PC-3 (cell line): ENCODE measurements at regions of chr7 and their contacts with region 1.

Region 1: DNA sequence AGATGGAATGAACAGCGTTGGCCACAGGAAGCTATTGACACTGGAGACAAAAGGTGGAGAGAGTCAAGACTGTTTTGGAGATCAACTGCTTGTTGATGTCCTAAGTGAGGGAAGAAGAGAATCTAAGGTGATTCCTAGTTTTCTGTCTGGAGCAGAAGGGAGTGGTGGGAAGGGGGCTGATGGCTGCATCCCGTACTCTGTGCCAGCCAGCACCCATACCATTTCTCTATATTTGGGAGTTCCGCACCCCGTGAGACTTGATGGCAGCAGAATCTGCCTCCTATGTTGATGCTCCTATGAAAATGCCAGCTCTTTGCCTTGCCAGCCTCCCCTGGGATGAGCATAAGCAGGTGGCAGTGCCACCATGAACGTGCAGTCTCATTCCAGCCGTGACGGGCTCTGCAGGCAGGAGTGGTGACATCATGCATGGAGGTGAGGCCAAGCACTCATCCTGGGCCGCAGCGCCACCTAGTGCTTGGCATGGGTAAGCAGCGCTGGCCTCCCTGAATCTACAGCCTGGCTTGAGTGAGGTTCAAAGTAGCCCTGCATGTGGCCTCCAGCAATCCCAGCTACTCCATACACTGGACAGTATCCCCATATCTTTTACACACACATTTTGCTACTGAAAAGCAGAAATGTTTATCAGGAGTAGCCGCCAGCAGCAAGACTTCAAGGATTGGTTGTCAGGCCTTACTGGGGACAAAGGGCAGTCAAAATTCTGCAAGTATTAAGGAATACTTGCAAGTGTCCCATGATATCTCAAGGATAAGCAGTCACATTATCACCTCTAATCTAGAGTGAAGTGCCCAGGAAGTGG is 43.0 kb downstream of the PODXL start:
- DNase-seq: peak; percentile 83
- ATAC-seq: peak; percentile 95
- H3K4me3 ChIP-seq: no peak overlapping the region
- H3K27ac ChIP-seq: no peak overlapping the region
- H3K4me1 ChIP-seq: peaks cover 10% of the 10 kb centered on the region; the same call in 1 of the 2 replicates
- H3K27me3 ChIP-seq: no peaks in the 10 kb centered on the region
- CTCF ChIP-seq: peak; percentile 93

Region 2: GRCh38 chr7:131527456-131527855 is 14.0 kb after region 1 on chr7:
- CTCF ChIA-PET with region 1: no interaction called
- POLR2A ChIA-PET with region 1: no interaction called
- intact Hi-C with region 1: no loop called
- DNase-seq: no peak
- ATAC-seq: no peak
- H3K4me3 ChIP-seq: no peak overlapping the region
- H3K27ac ChIP-seq: no peak overlapping the region
- H3K4me1 ChIP-seq: peaks cover 25% of the 10 kb centered on the region
- H3K27me3 ChIP-seq: no peaks in the 10 kb centered on the region
- CTCF ChIP-seq: no peak

Region 3: GRCh38 chr7:131538071-131538790 is 24.8 kb after region 1 on chr7:
- CTCF ChIA-PET with region 1: interaction called, 6 read pairs
- POLR2A ChIA-PET with region 1: no interaction called
- intact Hi-C with region 1: loop called (anchors 2 kb)
- DNase-seq: peak; percentile 88
- ATAC-seq: peak; percentile 91
- H3K4me3 ChIP-seq: no peak overlapping the region
- H3K27ac ChIP-seq: peak overlapping the region; percentile 87
- H3K4me1 ChIP-seq: peaks cover 35% of the 10 kb centered on the region
- H3K27me3 ChIP-seq: no peaks in the 10 kb centered on the region
- CTCF ChIP-seq: no peak